ENCODE measurements at regions of chr14 and their contacts with region 1.

Region 1: DNA sequence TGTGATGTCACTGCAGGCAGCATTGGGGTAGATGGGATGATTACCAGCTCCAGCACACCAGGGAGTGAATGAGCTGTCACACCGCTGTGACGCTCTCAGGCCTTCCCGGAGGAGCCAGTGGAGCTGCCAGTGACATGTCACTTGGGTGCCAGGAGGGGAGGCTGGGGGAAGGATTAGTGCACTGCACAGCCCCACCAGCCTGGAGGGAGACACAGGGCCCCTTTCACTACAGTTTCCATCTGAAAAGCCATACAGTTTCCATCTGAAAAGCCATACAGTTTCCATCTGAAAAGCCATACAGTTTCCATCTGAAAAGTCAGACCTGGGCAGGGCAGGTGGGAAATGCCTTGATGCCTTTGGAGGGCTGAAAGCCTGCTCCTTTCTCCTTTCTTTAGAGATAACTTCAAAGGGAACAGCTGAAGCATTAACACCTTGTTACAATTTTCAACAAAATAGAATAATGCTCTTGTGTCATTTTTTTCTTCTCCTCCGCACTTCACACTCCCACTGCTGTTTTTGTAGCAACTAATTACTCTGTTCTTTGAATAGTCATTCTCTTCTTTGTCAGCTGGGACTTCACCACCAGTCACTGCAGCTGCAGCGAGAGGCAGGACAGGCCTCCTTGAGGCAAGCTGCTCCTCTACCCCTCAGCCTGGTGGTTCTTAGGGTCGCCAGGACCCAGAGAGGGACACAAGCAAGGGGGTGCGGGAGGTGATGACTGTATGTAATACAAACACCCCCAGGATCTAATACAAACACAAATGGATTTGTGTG is 256.9 kb upstream of the RGS6 start:
- DNase-seq: no peak
- H3K4me3 Mint-ChIP-seq: no peak overlapping the region
- H3K27ac Mint-ChIP-seq: no peak overlapping the region
- H3K4me1 Mint-ChIP-seq: no peaks in the 10 kb centered on the region
- H3K27me3 Mint-ChIP-seq: no peaks in the 10 kb centered on the region

Region 2: GRCh38 chr14:71610149-71610548 is 65.2 kb before region 1 on chr14:
- CTCF ChIA-PET with region 1: no interaction called
- POLR2A ChIA-PET with region 1: no interaction called
- intact Hi-C with region 1: loop called (anchors 10 kb)
- DNase-seq: no peak
- H3K4me3 Mint-ChIP-seq: no peak overlapping the region
- H3K27ac Mint-ChIP-seq: no peak overlapping the region
- H3K4me1 Mint-ChIP-seq: peaks cover 22% of the 10 kb centered on the region
- H3K27me3 Mint-ChIP-seq: no peaks in the 10 kb centered on the region